GM12878 (cell line): ENCODE measurements at regions of chr10 and their contacts with region 1.

Region 1: DNA sequence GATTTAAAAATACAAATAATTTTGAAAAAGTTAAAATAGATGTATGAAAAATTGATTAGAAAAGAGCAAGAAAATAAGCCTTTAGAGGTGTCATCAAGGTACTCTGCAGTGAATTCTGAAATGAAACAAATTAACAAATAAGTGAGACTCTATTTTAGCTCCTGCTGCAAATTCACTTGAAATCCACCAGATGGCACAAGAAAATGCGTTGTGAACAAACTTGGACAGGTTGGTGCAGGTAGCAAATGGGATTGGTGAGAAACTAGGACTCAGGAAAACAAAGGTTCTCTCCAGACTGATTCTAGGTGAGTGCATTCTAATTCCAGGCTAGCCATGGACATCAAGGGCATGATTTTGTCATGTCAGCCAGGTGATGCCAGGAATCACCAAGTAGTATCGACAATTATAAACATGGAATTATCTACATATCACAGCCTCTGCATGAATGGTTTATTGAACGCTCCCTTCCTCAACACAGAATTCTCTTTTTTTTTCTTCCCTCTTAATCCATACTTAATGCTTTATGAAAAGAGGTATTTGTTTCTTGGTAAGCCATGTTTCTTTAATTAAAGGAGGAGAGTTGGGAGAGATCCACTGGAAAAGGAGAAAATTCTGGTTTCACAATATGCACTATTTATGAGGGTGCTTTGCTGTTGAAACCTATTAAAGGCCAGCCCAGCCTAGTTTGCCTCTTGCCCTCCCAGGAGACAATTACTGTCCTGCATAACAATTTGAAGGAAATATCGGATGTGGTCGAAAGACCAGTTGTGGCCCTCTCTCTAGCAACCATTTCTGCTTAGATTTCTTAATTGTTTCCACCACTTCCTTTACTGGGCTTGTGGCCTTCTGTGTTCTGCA is 118.1 kb downstream of the ZNF365 start:
- DNase-seq: peak; percentile 25
- ATAC-seq: peak; percentile 75
- H3K4me3 ChIP-seq: no peak overlapping the region
- H3K27ac ChIP-seq: no peak overlapping the region
- H3K4me1 ChIP-seq: no peaks in the 10 kb centered on the region
- H3K27me3 ChIP-seq: no peaks in the 10 kb centered on the region; a peak in 1 of 4 replicates
- CTCF ChIP-seq: peak; percentile 56 to 71 (median 71); a peak in 5 of 6 replicates
- EP300 ChIP-seq: no peak
- POLR2A ChIP-seq: no peak
- RAD21 ChIP-seq: peak; percentile 94

Region 2: GRCh38 chr10:62414359-62414758 is 77.9 kb before region 1 on chr10:
- CTCF ChIA-PET with region 1: no interaction called
- POLR2A ChIA-PET with region 1: no interaction called
- RAD21 ChIA-PET with region 1: no interaction called
- SMC1A ChIA-PET with region 1: no interaction called
- in situ Hi-C with region 1: no loop called
- intact Hi-C with region 1: no loop called
- DNase-seq: no peak
- ATAC-seq: no peak
- H3K4me3 ChIP-seq: no peak overlapping the region
- H3K27ac ChIP-seq: no peak overlapping the region
- H3K4me1 ChIP-seq: no peaks in the 10 kb centered on the region
- H3K27me3 ChIP-seq: no peaks in the 10 kb centered on the region
- CTCF ChIP-seq: no peak
- EP300 ChIP-seq: no peak
- POLR2A ChIP-seq: no peak
- RAD21 ChIP-seq: no peak

Region 3: DNA sequence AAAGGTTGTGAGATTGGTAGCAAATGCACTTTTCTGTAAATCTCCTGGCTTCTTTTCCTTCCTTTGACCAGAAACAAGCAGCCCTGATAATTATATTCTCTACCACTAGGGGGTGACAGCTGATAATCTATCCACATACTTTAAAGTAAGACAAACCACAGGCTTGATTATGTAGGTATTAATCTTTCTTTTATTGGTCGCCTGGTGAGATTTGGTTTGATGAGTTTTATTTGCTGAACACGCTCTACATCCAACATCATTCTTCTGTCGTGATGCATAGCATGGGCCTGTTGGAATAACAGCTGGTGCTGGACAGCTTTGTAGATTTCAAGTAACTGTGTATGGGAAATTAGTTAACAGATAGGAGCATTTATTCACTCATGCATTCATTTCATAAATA is 54.5 kb before region 1 on chr10:
- CTCF ChIA-PET with region 1: interaction called, 26 read pairs
- POLR2A ChIA-PET with region 1: no interaction called
- RAD21 ChIA-PET with region 1: interaction called, 8 read pairs
- SMC1A ChIA-PET with region 1: interaction called, 19 read pairs
- in situ Hi-C with region 1: no loop called
- intact Hi-C with region 1: loop called (anchors 2 kb)
- DNase-seq: no peak
- ATAC-seq: peak; percentile 81
- H3K4me3 ChIP-seq: no peak overlapping the region
- H3K27ac ChIP-seq: no peak overlapping the region
- H3K4me1 ChIP-seq: peaks cover 6% of the 10 kb centered on the region; the same call in 1 of the 2 replicates
- H3K27me3 ChIP-seq: no peaks in the 10 kb centered on the region; a peak in 1 of 4 replicates
- CTCF ChIP-seq: peak; percentile 54 to 77 (median 68); a peak in 5 of 6 replicates
- EP300 ChIP-seq: no peak
- POLR2A ChIP-seq: no peak
- RAD21 ChIP-seq: peak; percentile 94

Region 4: DNA sequence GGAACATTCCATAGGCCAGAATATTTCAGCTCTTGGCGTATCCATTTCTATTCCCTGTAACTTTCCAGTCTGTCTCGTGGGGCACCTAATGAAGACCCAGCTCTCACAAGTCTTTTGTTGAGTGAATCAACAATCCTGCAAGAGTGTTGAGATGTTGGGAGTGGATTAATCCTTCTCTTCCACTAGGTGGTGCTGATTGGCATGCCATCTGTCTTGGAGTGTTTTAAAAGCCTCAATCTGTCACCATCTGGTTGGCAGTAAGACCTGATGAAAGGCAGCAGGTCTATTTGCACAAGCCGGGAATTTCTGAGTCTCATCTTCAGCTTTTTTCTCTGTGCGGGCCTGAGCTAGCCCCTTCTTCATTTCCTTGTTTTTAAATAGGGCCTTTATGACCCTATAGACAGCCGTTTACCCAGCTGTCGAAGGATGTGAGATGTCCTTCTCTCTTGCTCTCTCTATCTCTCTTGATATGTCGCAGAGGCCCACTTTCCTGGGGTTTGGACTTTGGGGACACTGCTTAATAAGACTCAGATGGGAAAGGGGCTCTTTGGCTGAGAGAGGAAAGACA is 62.5 kb after region 1 on chr10:
- CTCF ChIA-PET with region 1: interaction called, 36 read pairs
- POLR2A ChIA-PET with region 1: no interaction called
- RAD21 ChIA-PET with region 1: interaction called, 5 read pairs
- SMC1A ChIA-PET with region 1: interaction called, 16 read pairs
- in situ Hi-C with region 1: no loop called
- intact Hi-C with region 1: loop called (anchors 1 kb)
- DNase-seq: no peak
- ATAC-seq: peak; percentile 93
- H3K4me3 ChIP-seq: no peak overlapping the region
- H3K27ac ChIP-seq: no peak overlapping the region
- H3K4me1 ChIP-seq: no peaks in the 10 kb centered on the region
- H3K27me3 ChIP-seq: peaks cover 2 to 4% of the 10 kb centered on the region in 2 experiments; a peak in 2 of 4 replicates
- CTCF ChIP-seq: peak; percentile 63 to 68 (median 63); a peak in 5 of 6 replicates
- EP300 ChIP-seq: no peak
- POLR2A ChIP-seq: no peak
- RAD21 ChIP-seq: peak; percentile 85

Region 5: GRCh38 chr10:62582804-62583208 is 90.6 kb after region 1 on chr10:
- CTCF ChIA-PET with region 1: interaction called, 15 read pairs
- POLR2A ChIA-PET with region 1: no interaction called
- RAD21 ChIA-PET with region 1: no interaction called
- SMC1A ChIA-PET with region 1: interaction called, 9 read pairs
- in situ Hi-C with region 1: no loop called
- intact Hi-C with region 1: no loop called
- DNase-seq: no peak
- ATAC-seq: no peak
- H3K4me3 ChIP-seq: no peak overlapping the region
- H3K27ac ChIP-seq: no peak overlapping the region
- H3K4me1 ChIP-seq: no peaks in the 10 kb centered on the region
- H3K27me3 ChIP-seq: no peaks in the 10 kb centered on the region
- CTCF ChIP-seq: no peak
- EP300 ChIP-seq: no peak
- POLR2A ChIP-seq: no peak
- RAD21 ChIP-seq: no peak

Region 6: GRCh38 chr10:63083904-63084689 is 591.9 kb after region 1 on chr10:
- CTCF ChIA-PET with region 1: interaction called, 18 read pairs
- POLR2A ChIA-PET with region 1: no interaction called
- RAD21 ChIA-PET with region 1: interaction called, 13 read pairs
- SMC1A ChIA-PET with region 1: interaction called, 14 read pairs
- in situ Hi-C with region 1: no loop called
- intact Hi-C with region 1: loop called (anchors 2 kb)
- DNase-seq: peak; percentile 38
- ATAC-seq: peak; percentile 94
- H3K4me3 ChIP-seq: no peak overlapping the region
- H3K27ac ChIP-seq: no peak overlapping the region
- H3K4me1 ChIP-seq: no peaks in the 10 kb centered on the region
- H3K27me3 ChIP-seq: no peaks in the 10 kb centered on the region; a peak in 1 of 4 replicates
- CTCF ChIP-seq: peak; percentile 63 to 84 (median 76)
- EP300 ChIP-seq: no peak
- POLR2A ChIP-seq: no peak
- RAD21 ChIP-seq: peak; percentile 99